ENCODE measurements at regions of chr9 and their contacts with region 1.

Region 1: DNA sequence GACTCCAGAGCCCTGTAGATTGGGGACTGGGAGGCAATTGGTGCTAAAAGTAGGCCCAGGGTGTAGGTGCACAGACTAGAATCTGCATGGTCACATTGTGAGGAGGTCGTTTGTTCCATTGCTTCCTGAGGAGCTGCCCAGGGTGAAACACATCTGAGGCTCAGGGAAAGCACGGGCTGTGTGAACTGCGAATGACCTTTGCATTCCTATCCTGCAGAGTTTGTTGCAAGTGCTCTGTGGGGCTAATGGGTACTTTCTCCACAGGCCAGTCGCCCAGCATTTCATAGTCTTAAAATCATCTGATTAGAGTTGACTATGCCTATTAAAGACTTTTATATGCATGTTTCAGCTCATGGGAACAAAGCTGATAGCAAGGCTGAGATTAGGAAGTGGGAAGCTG is 14.4 kb upstream of the SLC46A2 start:
- DNase-seq: no peak
- H3K4me3 ChIP-seq: no peak overlapping the region
- H3K27me3 ChIP-seq: peaks cover 2% of the 10 kb centered on the region
- CTCF ChIP-seq: no peak

Region 2: DNA sequence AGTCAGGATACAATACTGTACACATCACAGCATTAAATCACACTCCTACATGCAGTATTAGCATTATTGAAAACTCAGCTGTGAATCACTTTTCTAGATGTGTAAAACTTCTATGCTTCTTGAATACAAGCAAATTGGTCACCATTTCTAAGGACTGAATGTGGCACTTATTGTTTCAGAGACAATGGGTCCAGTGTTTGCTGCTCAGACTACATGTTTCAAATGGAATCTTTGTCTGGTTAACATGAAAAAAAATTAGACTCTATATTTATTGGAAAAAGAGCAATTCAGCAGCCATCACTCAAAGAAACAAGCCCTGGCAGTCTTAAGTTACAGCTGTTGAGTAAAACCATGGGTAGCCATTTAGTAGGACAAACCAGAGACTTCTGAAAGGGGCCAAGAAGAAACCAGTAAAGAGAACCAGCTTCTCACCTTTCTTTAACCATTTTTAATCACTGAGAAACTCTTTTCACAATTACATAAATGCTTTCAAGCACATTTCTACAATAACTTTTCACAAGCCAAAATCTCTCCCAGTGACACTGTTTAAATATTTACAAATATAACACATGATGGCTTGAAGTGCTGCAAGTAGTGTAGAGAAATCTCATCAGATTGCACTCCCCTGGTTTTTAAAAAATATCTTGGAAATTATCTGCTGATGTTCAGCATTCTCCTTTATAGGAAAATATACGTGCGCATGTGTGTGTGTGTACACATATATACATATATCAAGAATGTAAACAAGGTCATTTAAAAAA is 1610.2 kb before region 1 on chr9:
- CTCF ChIA-PET with region 1: no interaction called
- POLR2A ChIA-PET with region 1: no interaction called
- DNase-seq: no peak
- H3K4me3 ChIP-seq: no peak overlapping the region
- H3K27me3 ChIP-seq: no peaks in the 10 kb centered on the region
- CTCF ChIP-seq: no peak

Region 3: GRCh38 chr9:112844771-112845542 is 60.1 kb before region 1 on chr9:
- CTCF ChIA-PET with region 1: interaction called, 108 read pairs
- POLR2A ChIA-PET with region 1: interaction called, 4 read pairs
- DNase-seq: no peak
- H3K4me3 ChIP-seq: no peak overlapping the region
- H3K27me3 ChIP-seq: no peaks in the 10 kb centered on the region
- CTCF ChIP-seq: peak; percentile 98

Region 4: GRCh38 chr9:112881366-112881765 is 23.7 kb before region 1 on chr9:
- CTCF ChIA-PET with region 1: interaction called, 21 read pairs
- POLR2A ChIA-PET with region 1: interaction called, 3 read pairs
- DNase-seq: no peak
- H3K4me3 ChIP-seq: no peak overlapping the region
- H3K27me3 ChIP-seq: no peaks in the 10 kb centered on the region
- CTCF ChIP-seq: no peak

Region 5: GRCh38 chr9:112933696-112934095 is 28.6 kb after region 1 on chr9:
- CTCF ChIA-PET with region 1: no interaction called
- POLR2A ChIA-PET with region 1: no interaction called
- DNase-seq: no peak
- H3K4me3 ChIP-seq: no peak overlapping the region
- H3K27me3 ChIP-seq: peaks cover 6% of the 10 kb centered on the region
- CTCF ChIP-seq: no peak